ENCODE measurements at regions of chr3 and their contacts with region 1.

Region 1: GRCh38 chr3:157159762-157160657 is at the start of gene CCNL1:
- DNase-seq: peak; percentile 94
- H3K4me3 ChIP-seq: peak within 1 kb of the TSS; percentile 74 to 98
- H3K27ac ChIP-seq: peak within 1 kb of the TSS; percentile 99 to 100
- H3K4me1 ChIP-seq: peaks cover 29 to 37% of the 10 kb centered on the region in 2 experiments
- H3K27me3 ChIP-seq: no peaks in the 10 kb centered on the region
- CTCF ChIP-seq: no peak
- EP300 ChIP-seq: peak; percentile 43 to 52; a peak in 2 of 4 replicates
- RAD21 ChIP-seq: no peak
- polyA plus RNA-seq, gene CCNL1: 99.8 and 131 TPM in 2 replicates

Region 2: DNA sequence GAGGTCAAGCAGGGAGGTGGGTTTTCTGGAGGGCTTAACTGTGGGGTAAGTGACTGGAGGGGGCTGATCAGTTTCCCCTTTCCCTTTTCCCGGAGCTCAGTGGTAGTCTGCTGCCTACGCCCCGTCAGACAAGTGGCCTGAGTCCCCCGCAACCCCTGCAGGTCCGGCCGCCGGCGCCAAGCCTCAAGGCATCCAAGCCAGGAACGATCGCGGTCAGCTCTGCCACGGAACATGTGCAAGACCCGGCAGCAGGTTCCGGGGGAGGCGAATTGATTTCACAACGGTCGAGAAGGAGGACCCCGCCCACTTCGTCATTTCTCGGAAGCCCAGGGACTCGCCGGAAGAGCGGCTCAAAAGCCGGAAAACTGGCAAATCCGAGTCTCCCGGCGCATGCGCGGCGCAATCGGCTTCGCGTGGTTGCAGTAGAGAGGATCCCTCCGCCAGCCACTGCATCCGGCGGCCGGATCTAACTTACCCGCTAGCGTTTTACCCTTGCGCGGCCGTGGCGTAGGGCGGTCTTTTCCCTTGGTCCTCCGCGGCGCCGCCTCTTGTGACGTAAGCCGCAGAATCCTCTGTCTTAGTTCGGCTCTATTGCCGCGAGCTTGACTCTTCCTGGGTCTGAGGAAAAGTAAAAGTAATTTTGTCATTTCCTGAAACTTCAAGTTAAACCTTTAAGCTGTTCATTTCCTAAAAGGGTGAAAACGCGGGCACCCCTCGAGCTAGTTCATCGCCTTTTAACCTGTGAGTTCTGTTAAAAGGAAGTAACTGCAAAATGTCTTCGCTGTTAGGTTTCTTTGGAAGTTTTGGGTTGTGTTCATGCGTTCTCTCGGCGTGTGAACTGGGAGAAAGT is 14.9 kb after region 1 on chr3:
- CTCF ChIA-PET with region 1: interaction called, 22 read pairs
- POLR2A ChIA-PET with region 1: interaction called, 94 read pairs
- DNase-seq: peak; percentile 92
- H3K4me3 ChIP-seq: peak overlapping the region; percentile 73 to 74
- H3K27ac ChIP-seq: peak overlapping the region; percentile 98 to 99
- H3K4me1 ChIP-seq: peaks cover 0 to 10% of the 10 kb centered on the region in 2 experiments; a peak in 2 of 4 replicates
- H3K27me3 ChIP-seq: no peaks in the 10 kb centered on the region
- CTCF ChIP-seq: no peak
- EP300 ChIP-seq: peak; percentile 56 to 64; a peak in 2 of 4 replicates
- RAD21 ChIP-seq: peak; percentile 8; the same call in 1 of the 2 replicates

Region 3: DNA sequence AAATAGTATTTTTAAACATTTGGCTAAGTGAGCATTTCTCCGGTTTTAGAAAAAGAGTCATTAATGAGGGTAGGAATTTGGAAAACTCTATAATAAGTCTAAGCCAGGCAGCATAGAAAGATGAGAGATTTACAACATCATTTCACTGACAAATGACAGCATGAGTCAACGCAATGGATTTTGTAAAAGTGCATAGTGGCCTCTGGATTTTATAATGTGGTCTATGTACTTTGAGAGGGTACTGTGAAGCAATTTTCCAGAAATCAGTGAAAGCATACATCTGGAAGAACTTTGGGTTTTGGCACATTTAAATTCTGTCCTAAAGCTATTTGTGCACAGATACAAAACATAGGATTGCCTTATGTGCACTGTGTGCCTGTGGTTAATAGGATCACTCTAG is 130.8 kb after region 1 on chr3:
- CTCF ChIA-PET with region 1: no interaction called
- POLR2A ChIA-PET with region 1: no interaction called
- DNase-seq: no peak
- H3K4me3 ChIP-seq: no peak overlapping the region
- H3K27ac ChIP-seq: peak overlapping the region; percentile 71 to 87; a peak in 3 of 4 replicates
- H3K4me1 ChIP-seq: peaks cover 3 to 22% of the 10 kb centered on the region in 2 experiments; a peak in 2 of 4 replicates
- H3K27me3 ChIP-seq: no peaks in the 10 kb centered on the region
- CTCF ChIP-seq: no peak
- EP300 ChIP-seq: peak; percentile 79 to 91
- RAD21 ChIP-seq: no peak

Measured in SK-N-SH (cell line).